ENCODE measurements at regions of chr6 and their contacts with region 1.

Region 1: GRCh38 chr6:100657678-100658330 is 193.1 kb upstream of the SIM1 start:
- DNase-seq: peak; percentile 3
- ATAC-seq: no peak
- H3K4me3 ChIP-seq: no peak overlapping the region
- H3K27ac ChIP-seq: no peak overlapping the region
- H3K4me1 ChIP-seq: no peaks in the 10 kb centered on the region
- H3K27me3 ChIP-seq: no peaks in the 10 kb centered on the region
- CTCF ChIP-seq: peak; percentile 59
- POLR2A ChIP-seq: no peak
- RAD21 ChIP-seq: peak; percentile 43; the same call in 1 of the 2 replicates

Region 2: GRCh38 chr6:100592929-100593328 is 64.9 kb before region 1 on chr6:
- CTCF ChIA-PET with region 1: no interaction called
- POLR2A ChIA-PET with region 1: no interaction called
- dilution Hi-C with region 1: no loop called
- in situ Hi-C with region 1: no loop called
- intact Hi-C with region 1: no loop called
- DNase-seq: no peak
- ATAC-seq: no peak
- H3K4me3 ChIP-seq: no peak overlapping the region
- H3K27ac ChIP-seq: no peak overlapping the region
- H3K4me1 ChIP-seq: 0 out of 2 replicates have a peak, but pooled peaks cover 2% of the 10 kb centered on the region
- H3K27me3 ChIP-seq: no peaks in the 10 kb centered on the region
- CTCF ChIP-seq: no peak
- POLR2A ChIP-seq: no peak
- RAD21 ChIP-seq: no peak

Region 3: DNA sequence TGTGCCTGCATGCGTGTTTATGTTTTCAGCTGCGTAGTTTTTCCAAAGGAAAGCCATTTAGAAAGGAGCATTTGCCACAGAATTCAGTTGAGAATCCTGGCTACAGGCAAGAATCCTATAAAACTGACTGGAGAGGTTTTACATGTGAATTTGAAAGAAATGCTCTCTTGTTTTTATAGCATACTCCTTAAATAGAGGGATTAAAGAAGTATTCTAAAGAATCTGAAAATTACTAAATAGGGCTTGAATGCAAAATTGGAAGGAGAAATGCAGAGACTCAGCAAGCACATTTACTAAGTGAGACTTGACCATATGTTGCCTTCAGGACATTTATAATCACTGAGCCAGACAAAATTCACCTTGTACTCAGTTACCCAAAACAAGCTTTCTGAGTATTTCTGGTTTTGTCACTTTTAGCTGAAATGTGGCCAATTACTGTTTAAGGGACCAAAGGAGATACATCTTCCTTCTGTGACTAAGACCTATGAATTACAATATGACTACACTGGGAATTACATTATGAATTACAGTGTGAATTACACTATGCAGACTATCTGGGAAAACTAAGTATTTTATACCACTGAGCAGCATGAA is 330.7 kb after region 1 on chr6:
- CTCF ChIA-PET with region 1: no interaction called
- POLR2A ChIA-PET with region 1: interaction called, 10 read pairs
- dilution Hi-C with region 1: no loop called
- in situ Hi-C with region 1: no loop called
- intact Hi-C with region 1: no loop called
- DNase-seq: no peak
- ATAC-seq: no peak
- H3K4me3 ChIP-seq: no peak overlapping the region
- H3K27ac ChIP-seq: no peak overlapping the region
- H3K4me1 ChIP-seq: no peaks in the 10 kb centered on the region
- H3K27me3 ChIP-seq: no peaks in the 10 kb centered on the region
- CTCF ChIP-seq: no peak
- POLR2A ChIP-seq: no peak
- RAD21 ChIP-seq: no peak